ENCODE measurements at regions of chr19 and their contacts with region 1.

Region 1: DNA sequence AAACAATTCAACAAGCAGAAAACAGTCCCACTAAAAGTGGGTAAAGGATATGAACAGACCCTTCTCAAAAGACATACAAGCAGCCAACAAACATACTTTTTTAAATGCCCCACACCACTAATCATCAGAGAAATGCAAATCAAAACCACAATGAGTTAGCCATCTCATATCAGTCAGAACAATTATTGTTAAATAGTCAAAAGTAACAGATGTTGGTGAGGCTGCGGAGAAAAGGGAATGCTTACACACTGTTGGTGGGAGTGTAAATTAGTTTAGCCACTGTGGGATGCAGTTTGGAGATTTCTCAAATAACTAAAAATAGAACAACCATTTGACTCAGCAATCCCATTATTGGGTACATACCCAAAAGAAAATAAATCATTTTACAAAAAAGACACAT is 8.7 kb downstream of the ZNF529 start:
- DNase-seq: no peak
- H3K4me3 ChIP-seq: no peak overlapping the region
- H3K27ac ChIP-seq: no peak overlapping the region
- H3K4me1 ChIP-seq: no peaks in the 10 kb centered on the region
- H3K27me3 ChIP-seq: no peaks in the 10 kb centered on the region
- CTCF ChIP-seq: no peak

Region 2: DNA sequence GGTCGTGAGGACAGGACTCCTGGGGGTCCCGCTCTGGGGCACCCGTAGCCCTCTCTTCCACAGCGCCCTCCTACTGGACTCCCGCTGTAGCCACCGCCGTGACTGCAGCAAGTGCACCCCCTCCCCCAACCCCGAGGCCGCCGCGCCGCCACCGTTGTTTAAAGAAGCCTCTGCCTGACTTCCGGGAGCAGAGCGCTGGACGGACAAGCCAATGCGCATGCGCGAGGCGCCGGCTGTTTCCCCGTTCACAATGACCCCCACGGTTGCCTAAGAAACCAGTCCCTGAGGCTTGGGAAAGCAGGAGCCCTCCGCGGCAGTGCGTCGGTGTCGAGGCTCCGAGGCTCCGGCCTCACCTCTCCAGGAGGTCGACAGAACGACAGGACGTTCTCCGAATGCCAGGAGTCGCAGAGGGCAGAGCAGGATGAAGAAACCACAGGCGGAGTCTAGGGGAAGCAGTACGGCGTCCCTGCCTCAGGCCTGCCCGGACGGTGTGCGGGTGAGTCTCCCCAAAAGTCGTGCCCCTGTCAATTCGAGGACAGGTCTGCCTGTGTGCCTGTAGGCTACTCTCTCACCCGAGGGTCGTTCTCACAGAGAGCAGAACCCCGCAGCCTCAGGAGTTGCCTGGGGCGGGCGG is 443.3 kb after region 1 on chr19:
- CTCF ChIA-PET with region 1: no interaction called
- POLR2A ChIA-PET with region 1: interaction called, 40 read pairs
- intact Hi-C with region 1: no loop called
- DNase-seq: no peak
- H3K4me3 ChIP-seq: no peak overlapping the region
- H3K27ac ChIP-seq: no peak overlapping the region
- H3K4me1 ChIP-seq: no peaks in the 10 kb centered on the region
- H3K27me3 ChIP-seq: peaks cover 12% of the 10 kb centered on the region
- CTCF ChIP-seq: no peak

Measured in PC-9 (cell line).